Heart right ventricle (tissue), 16 donors: ENCODE measurements at regions of chr2 and their contacts with region 1.

Region 1: DNA sequence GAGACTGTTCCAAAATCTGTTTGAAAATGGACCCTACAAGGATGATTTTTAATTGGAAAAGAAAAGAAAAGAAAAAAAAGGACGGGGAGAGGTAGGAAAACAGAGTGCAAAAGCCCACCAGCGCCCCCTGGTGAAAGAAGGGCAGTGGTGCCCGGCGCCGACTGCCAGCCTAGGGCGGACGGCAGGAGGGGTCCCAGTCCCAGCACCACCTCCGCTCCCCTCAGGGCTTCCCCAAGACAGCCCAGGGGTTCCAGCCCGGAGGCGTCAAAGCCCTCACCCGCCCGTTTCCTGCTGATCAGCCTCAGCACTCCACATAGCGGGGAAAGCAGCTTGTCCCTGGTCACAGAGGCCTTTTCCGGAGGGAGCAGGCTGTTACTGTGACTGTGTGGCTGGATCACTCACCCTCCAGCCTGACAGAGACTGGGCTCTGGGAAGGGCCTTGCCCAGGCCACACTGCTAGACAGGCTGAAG is 213.9 kb downstream of the TFCP2L1 start:
- DNase-seq: peak; percentile 41 to 74
- ATAC-seq: peak in 7 of 8 donors; percentile 36 to 77 (median 66)
- H3K4me3 ChIP-seq: no peak overlapping the region
- H3K27ac ChIP-seq: no peak overlapping the region
- H3K4me1 ChIP-seq: peaks cover 0 to 23% (median 3%) of the 10 kb centered on the region in 9 donors
- H3K27me3 ChIP-seq: peaks cover 0 to 53% (median 35%) of the 10 kb centered on the region in 7 donors
- CTCF ChIP-seq: peak; percentile 78 to 99 (median 92)

Region 2: DNA sequence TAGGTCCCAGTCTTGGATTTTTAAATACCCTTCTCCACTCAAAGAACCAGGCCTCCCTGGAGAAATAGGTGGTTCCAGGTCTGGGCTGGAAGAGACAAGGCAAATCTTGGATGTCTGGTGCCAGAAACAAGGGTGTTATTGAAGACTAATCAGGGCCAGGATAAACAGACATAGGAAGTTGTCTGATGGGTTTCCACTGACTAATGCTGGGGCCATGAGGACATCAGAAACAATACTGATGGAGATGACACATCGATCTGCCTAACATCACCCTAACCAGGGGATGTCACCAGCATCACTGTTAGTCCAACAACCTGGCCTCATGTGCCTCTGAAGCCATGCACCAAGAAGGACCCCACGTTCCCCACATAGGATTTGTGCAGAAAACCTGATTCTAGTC is 377.9 kb before region 1 on chr2:
- intact Hi-C with region 1: loop called in 8 of 10 experiments (anchors 1 to 5 kb)
- DNase-seq: no peak
- ATAC-seq: no peak
- H3K4me3 ChIP-seq: no peak overlapping the region
- H3K27ac ChIP-seq: no peak overlapping the region
- H3K4me1 ChIP-seq: peaks cover 0 to 4% (median 0%) of the 10 kb centered on the region in 9 donors
- H3K27me3 ChIP-seq: peaks cover 0 to 65% (median 46%) of the 10 kb centered on the region in 7 donors
- CTCF ChIP-seq: no peak

Region 3: DNA sequence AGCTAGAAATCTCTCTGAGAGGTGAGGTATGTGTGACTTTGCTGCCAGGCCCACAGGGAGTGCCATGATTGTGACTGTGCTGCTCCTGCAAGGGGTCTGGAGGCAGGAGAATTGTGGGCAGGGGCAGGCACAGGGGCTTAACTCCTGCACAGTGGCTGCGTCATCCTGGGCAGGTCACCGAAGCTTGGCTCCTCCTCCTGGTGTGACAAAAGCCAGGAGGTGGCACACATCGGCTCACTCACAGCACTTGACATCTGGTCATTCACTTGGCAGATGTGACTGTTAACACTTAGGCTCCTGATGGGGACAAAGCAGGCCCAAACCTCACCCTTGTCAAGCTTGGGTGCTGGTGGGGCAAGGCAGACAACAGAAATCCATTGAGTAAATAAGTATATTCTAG is 371.8 kb before region 1 on chr2:
- intact Hi-C with region 1: loop called in 8 of 10 experiments (anchors 1 to 5 kb)
- DNase-seq: no peak
- ATAC-seq: no peak
- H3K4me3 ChIP-seq: no peak overlapping the region
- H3K27ac ChIP-seq: no peak overlapping the region
- H3K4me1 ChIP-seq: peaks cover 0 to 4% (median 0%) of the 10 kb centered on the region in 9 donors
- H3K27me3 ChIP-seq: peaks cover 0 to 69% (median 38%) of the 10 kb centered on the region in 7 donors
- CTCF ChIP-seq: no peak

Region 4: DNA sequence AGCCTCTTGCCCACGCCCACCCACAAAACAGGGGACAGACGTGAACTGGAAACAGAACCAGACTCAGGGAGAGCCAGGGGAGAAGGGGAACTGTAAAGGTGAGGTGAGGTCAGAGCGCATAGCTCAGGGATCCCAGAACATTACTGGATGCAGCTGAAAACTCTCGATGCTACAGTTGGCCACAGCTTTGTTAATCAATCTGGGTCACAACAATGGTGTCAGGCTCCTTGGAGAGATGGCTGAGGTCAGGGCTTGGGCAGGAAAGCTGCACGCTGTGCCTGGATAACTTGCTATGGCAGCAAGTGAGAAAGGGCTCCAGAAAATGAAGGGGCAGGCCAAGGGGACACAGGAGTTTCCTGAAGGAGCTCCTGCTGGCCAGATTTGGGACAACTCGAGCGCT is 49.4 kb before region 1 on chr2:
- intact Hi-C with region 1: no loop called
- DNase-seq: no peak
- ATAC-seq: peak in 1 of 8 donors; percentile 21
- H3K4me3 ChIP-seq: no peak overlapping the region
- H3K27ac ChIP-seq: no peak overlapping the region
- H3K4me1 ChIP-seq: peaks cover 0 to 9% (median 0%) of the 10 kb centered on the region in 9 donors
- H3K27me3 ChIP-seq: peaks cover 0 to 19% (median 6%) of the 10 kb centered on the region in 7 donors
- CTCF ChIP-seq: no peak